Aorta (tissue), 5 donors: ENCODE measurements at regions of chr10 and their contacts with region 1.

Region 1: GRCh38 chr10:94092848-94093247 is 99.1 kb downstream of the PLCE1 start:
- DNase-seq: no peak
- ATAC-seq: no peak
- H3K4me3 ChIP-seq: no peak overlapping the region
- H3K27ac ChIP-seq: peak overlapping the region in 1 of 2 donors; percentile 95
- H3K4me1 ChIP-seq: peaks cover 13 to 24% of the 10 kb centered on the region in 2 donors
- H3K27me3 ChIP-seq: no peaks in the 10 kb centered on the region

Region 2: GRCh38 chr10:94129393-94130130 is 36.7 kb after region 1 on chr10:
- intact Hi-C with region 1: loop called in 1 of 2 experiments (anchors 5 kb)
- DNase-seq: peak; percentile 66 to 77
- ATAC-seq: no peak
- H3K4me3 ChIP-seq: no peak overlapping the region
- H3K27ac ChIP-seq: peak overlapping the region; percentile 38 to 95
- H3K4me1 ChIP-seq: peaks cover 11% of the 10 kb centered on the region in 2 donors
- H3K27me3 ChIP-seq: no peaks in the 10 kb centered on the region

Region 3: DNA sequence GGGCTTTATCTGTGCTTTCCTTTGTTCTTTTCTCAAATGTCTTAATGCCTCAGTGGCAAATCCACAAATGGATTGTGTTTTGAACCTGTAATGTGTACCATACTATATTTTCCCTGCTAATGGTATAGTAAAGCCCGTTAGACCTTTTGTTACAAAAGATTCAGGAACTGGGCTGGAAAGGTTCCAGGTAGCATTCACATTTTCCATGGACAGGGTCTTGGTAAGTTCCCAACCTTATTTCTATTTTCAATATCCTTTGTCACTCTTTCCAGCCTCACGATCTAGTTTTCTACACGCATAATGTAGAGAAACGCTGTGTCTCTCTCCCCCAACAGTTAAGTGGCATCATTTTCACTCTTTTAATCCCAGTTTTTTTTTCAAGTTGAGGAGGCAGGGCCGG is 53.9 kb after region 1 on chr10:
- intact Hi-C with region 1: loop called (anchors 5 kb)
- DNase-seq: no peak
- ATAC-seq: no peak
- H3K4me3 ChIP-seq: no peak overlapping the region
- H3K27ac ChIP-seq: peak overlapping the region; percentile 90 to 96
- H3K4me1 ChIP-seq: peaks cover 0 to 6% of the 10 kb centered on the region in 2 donors
- H3K27me3 ChIP-seq: no peaks in the 10 kb centered on the region

Region 4: DNA sequence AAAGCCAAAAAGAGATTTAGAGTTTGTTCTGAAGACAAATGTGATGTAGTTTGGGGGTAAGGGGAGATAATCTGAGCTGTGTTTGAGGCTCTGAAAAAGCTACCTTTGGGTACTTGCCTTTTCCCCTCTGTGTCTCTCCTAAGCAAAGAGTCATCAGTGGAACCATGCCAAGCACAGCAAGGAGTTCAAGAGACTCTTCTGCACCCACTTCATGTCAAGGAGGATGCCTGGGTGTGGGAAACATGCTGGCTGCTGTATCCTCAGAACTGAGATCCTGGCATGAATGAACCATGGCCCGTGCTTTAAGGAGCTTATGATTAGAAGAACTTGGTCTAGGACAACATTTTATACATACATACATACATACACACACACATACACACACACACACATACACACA is 127.0 kb after region 1 on chr10:
- intact Hi-C with region 1: loop called (anchors 5 kb)
- DNase-seq: no peak
- ATAC-seq: no peak
- H3K4me3 ChIP-seq: no peak overlapping the region
- H3K27ac ChIP-seq: no peak overlapping the region
- H3K4me1 ChIP-seq: peaks cover 0 to 8% of the 10 kb centered on the region in 2 donors
- H3K27me3 ChIP-seq: no peaks in the 10 kb centered on the region

Region 5: DNA sequence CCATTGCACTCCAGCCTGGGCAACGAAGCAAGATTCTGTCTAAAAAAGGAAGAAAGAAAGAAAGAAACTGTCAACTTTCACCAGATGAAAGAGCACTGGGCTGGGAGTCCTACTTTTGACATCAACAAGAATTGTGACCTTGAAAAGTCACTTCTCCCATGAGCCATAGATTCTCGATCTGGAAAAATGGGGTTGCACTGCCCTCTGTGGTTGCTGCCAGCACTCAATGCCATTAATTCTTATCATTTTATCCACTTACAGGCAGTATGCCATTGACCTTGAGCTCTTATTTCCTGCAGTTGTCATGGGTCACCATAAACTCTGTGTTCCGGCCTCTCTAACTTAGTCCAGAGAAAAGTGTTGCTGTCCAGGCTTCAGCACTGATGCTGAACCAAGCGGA is 132.7 kb after region 1 on chr10:
- intact Hi-C with region 1: loop called in 1 of 2 experiments (anchors 5 kb)
- DNase-seq: no peak
- ATAC-seq: no peak
- H3K4me3 ChIP-seq: no peak overlapping the region
- H3K27ac ChIP-seq: peak overlapping the region in 1 of 2 donors; percentile 23
- H3K4me1 ChIP-seq: no peaks in the 10 kb centered on the region
- H3K27me3 ChIP-seq: no peaks in the 10 kb centered on the region